Activated B cell treated with CpG ODN at 0.5 μM for 24 hours (primary cell): ENCODE measurements at regions of chr2 and their contacts with region 1.

Region 1: DNA sequence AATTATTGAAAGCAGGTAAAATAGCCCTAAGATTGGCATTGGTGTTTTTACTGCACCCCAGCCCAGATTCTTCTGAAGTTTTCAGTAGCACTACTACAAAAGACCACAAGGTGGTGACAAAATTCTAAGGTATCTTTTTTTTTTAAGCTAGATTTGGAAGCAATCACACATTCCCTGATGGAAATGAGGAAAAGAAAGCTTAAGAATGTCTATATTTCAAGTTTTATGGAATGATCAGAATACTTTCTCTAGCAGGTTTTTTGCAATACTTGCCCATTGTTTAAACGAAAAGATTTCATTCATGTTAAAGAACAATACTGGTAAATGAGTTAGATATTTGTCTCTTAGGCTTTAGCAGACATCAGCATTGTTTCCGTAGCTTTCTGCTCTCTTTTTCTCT is 32.1 kb upstream of the ZNF638 start:
- DNase-seq: no peak
- ATAC-seq: no peak
- H3K4me3 Mint-ChIP-seq: no peak overlapping the region
- H3K27ac Mint-ChIP-seq: no peak overlapping the region
- H3K4me1 Mint-ChIP-seq: no peaks in the 10 kb centered on the region
- H3K27me3 Mint-ChIP-seq: peaks cover 2% of the 10 kb centered on the region
- CTCF ChIP-seq: peak; percentile 86

Region 2: GRCh38 chr2:71157124-71157793 is 142.2 kb before region 1 on chr2:
- CTCF ChIA-PET with region 1: interaction called, 4 read pairs
- POLR2A ChIA-PET with region 1: no interaction called
- intact Hi-C with region 1: loop called (anchors 1 kb)
- DNase-seq: peak; percentile 41
- ATAC-seq: peak; percentile 68
- H3K4me3 Mint-ChIP-seq: no peak overlapping the region
- H3K27ac Mint-ChIP-seq: no peak overlapping the region
- H3K4me1 Mint-ChIP-seq: peaks cover 4% of the 10 kb centered on the region
- H3K27me3 Mint-ChIP-seq: peaks cover 10% of the 10 kb centered on the region
- CTCF ChIP-seq: no peak

Region 3: DNA sequence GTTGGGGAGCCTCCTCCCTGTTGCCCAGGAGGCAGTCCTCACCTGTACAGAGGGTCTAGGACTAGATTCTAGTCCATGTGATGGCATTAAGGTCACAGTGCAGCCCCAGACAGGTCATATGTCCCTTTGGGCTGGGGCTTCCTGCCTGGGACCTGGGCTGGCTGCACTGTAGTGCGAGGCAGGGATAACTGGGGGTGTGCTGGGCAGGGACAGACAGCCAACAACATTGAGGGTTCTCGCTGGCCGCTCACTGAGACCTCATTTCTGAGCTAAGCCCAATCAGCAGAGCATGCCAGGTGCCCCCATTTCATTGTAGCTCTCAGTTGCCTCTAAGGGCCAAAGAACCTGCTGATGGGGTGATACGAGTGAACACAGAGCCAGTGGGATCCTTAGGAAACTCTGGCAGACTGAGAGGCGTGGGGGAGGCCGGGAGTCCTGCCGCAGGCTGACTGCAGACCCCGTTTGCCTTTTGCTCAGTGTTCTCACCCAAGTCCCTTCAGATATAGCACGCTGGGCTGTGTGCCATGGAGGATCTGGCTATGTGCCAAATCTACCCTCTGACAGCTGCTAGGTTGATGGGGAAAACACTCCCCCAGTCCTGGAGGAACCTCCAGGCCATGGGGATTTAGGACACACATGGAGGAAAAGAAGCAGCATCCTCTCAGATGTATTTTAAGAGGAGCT is 205.7 kb after region 1 on chr2:
- CTCF ChIA-PET with region 1: interaction called, 112 read pairs
- POLR2A ChIA-PET with region 1: interaction called, 3 read pairs
- intact Hi-C with region 1: loop called (anchors 1 kb)
- DNase-seq: no peak
- ATAC-seq: no peak
- H3K4me3 Mint-ChIP-seq: no peak overlapping the region
- H3K27ac Mint-ChIP-seq: no peak overlapping the region
- H3K4me1 Mint-ChIP-seq: peaks cover 2% of the 10 kb centered on the region
- H3K27me3 Mint-ChIP-seq: peaks cover 3% of the 10 kb centered on the region
- CTCF ChIP-seq: no peak

Region 4: GRCh38 chr2:72150157-72150865 is 850.8 kb after region 1 on chr2:
- CTCF ChIA-PET with region 1: no interaction called
- POLR2A ChIA-PET with region 1: no interaction called
- intact Hi-C with region 1: loop called (anchors 5 kb)
- DNase-seq: no peak
- ATAC-seq: peak; percentile 66
- H3K4me3 Mint-ChIP-seq: peak overlapping the region; percentile 80
- H3K27ac Mint-ChIP-seq: peak overlapping the region; percentile 19
- H3K4me1 Mint-ChIP-seq: peaks cover 41% of the 10 kb centered on the region
- H3K27me3 Mint-ChIP-seq: peaks cover 65% of the 10 kb centered on the region
- CTCF ChIP-seq: no peak